BJ (cell line): ENCODE measurements at regions of chr17 and their contacts with region 1.

Region 1: GRCh38 chr17:1516388-1517161 is at the start of gene INPP5K:
- DNase-seq: peak; percentile 86
- H3K4me3 ChIP-seq: peak within 1 kb of the TSS; percentile 98
- H3K27me3 ChIP-seq: no peaks in the 10 kb centered on the region
- CTCF ChIP-seq: no peak
- polyA plus RNA-seq, gene INPP5K: 43.9 and 45.3 TPM in 2 replicates

Region 2: DNA sequence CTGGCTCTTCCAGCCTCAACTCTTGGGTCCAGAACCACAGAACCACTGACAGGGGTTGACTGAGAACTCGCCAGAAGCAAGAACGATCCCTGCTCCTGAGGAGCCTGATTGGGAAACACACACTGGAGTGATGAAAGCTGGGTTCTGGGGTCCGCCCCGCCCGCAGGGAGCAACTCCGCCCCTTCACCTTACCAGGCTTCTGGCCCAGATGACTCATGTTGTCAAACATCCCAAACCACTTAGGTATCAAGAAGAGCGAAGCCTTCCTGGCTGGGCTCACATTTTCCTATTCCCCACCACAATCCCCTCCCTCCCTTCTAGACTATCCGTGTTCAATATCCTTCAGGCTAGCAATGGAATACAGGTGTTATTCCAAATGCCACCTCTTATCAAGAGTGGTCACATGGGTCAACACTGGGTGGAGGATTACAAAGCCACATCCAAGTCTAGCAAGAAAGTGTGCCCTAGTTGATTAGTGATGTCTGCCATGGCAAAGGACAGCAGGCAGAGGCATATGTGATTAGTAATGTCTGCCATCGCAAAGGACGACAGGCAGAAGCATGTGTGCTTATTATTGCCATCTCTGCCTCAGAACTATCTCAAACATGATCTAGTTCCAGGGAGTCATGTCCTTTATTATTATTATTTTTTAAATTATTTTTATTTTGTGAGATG is 449.2 kb before region 1 on chr17:
- CTCF ChIA-PET with region 1: no interaction called
- POLR2A ChIA-PET with region 1: no interaction called
- DNase-seq: no peak
- H3K4me3 ChIP-seq: no peak overlapping the region
- H3K27me3 ChIP-seq: no peaks in the 10 kb centered on the region
- CTCF ChIP-seq: no peak

Region 3: DNA sequence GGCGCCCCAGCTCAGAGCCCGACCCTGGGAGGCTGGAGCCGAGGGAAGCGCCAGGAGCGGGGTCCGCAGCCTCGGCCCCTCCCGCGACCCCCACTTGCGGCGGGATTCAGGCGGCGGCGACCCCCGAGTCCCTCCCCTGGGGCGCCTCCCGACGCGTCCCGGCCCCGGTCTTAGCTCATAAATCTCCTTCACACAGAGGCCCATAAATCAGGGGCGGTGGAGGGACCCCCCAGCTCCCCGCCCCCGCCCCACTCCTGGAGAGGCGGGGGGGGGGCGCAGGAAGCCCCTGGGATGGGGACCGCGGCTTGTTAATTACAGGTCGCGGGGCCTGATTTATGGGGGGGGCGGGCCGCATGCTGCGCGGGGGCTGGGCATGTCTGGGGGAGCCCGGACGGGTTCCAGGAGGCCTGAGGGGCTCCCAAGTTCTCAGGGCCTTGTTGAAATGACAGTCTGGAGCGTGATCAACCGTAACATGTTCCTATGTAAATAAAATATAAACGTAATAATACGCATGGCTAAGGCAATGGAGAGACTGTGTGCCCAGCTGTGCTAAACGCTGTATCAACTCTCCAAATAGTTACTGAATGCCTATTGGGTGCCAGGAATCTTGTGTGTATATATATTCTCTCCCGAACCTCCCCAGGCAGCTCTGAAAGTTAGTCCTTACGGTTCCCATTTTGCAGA is 256.3 kb before region 1 on chr17:
- CTCF ChIA-PET with region 1: interaction called, 27 read pairs
- POLR2A ChIA-PET with region 1: interaction called, 5 read pairs
- DNase-seq: no peak
- H3K4me3 ChIP-seq: peak overlapping the region; percentile 56
- H3K27me3 ChIP-seq: peaks cover 3% of the 10 kb centered on the region; the same call in 1 of the 2 replicates
- CTCF ChIP-seq: no peak

Region 4: GRCh38 chr17:1275962-1276736 is 240.4 kb before region 1 on chr17:
- CTCF ChIA-PET with region 1: interaction called, 12 read pairs
- POLR2A ChIA-PET with region 1: interaction called, 3 read pairs
- DNase-seq: no peak
- H3K4me3 ChIP-seq: no peak overlapping the region
- H3K27me3 ChIP-seq: peaks cover 14% of the 10 kb centered on the region
- CTCF ChIP-seq: peak; percentile 92

Region 5: GRCh38 chr17:1331708-1332107 is 184.9 kb before region 1 on chr17:
- CTCF ChIA-PET with region 1: interaction called, 10 read pairs
- POLR2A ChIA-PET with region 1: no interaction called
- DNase-seq: no peak
- H3K4me3 ChIP-seq: no peak overlapping the region
- H3K27me3 ChIP-seq: no peaks in the 10 kb centered on the region
- CTCF ChIP-seq: no peak

Region 6: GRCh38 chr17:1399679-1400512 is 116.7 kb before region 1 on chr17 and contains the start of gene YWHAE:
- CTCF ChIA-PET with region 1: no interaction called
- POLR2A ChIA-PET with region 1: no interaction called
- DNase-seq: peak; percentile 63
- H3K4me3 ChIP-seq: peak within 1 kb of the TSS; percentile 78
- H3K27me3 ChIP-seq: no peaks in the 10 kb centered on the region
- CTCF ChIP-seq: no peak
- polyA plus RNA-seq, gene YWHAE: 618 and 665 TPM in 2 replicates

Region 7: DNA sequence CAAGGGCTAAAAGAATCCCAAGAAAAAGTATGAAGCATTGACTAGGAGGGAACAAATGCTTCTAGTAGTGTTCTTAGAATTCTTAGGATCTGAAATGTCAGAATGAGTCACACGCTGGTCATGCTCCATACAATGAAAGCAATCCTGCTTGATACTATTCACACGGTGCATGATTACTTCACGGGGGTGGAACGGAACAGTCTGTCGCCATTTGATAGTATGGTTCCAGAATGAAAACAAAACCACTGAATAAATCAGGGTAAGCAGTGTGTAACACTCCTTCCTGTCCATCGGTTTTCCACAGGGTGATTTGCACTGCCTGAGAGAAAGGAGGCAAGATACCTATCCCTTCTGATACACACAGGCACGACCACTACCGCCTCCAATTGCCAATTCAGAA is 93.7 kb before region 1 on chr17:
- CTCF ChIA-PET with region 1: no interaction called
- POLR2A ChIA-PET with region 1: no interaction called
- DNase-seq: peak; percentile 78
- H3K4me3 ChIP-seq: no peak overlapping the region
- H3K27me3 ChIP-seq: no peaks in the 10 kb centered on the region
- CTCF ChIP-seq: no peak

Region 8: GRCh38 chr17:1488030-1488863 is 28.3 kb before region 1 on chr17:
- CTCF ChIA-PET with region 1: interaction called, 12 read pairs
- POLR2A ChIA-PET with region 1: interaction called, 3 read pairs
- DNase-seq: peak; percentile 56
- H3K4me3 ChIP-seq: peak overlapping the region; percentile 52
- H3K27me3 ChIP-seq: no peaks in the 10 kb centered on the region
- CTCF ChIP-seq: no peak

Region 9: GRCh38 chr17:1541367-1541904 is 24.9 kb after region 1 on chr17:
- CTCF ChIA-PET with region 1: no interaction called
- POLR2A ChIA-PET with region 1: no interaction called
- DNase-seq: no peak
- H3K4me3 ChIP-seq: no peak overlapping the region
- H3K27me3 ChIP-seq: no peaks in the 10 kb centered on the region
- CTCF ChIP-seq: no peak